PC-3 (cell line): ENCODE measurements at regions of chr18 and their contacts with region 1.

Region 1: GRCh38 chr18:67425724-67426123 is 90.8 kb downstream of the DSEL start:
- DNase-seq: peak; percentile 96
- ATAC-seq: peak; percentile 93
- H3K4me3 ChIP-seq: no peak overlapping the region
- H3K27ac ChIP-seq: peak overlapping the region; percentile 52
- H3K4me1 ChIP-seq: peaks cover 28% of the 10 kb centered on the region
- H3K27me3 ChIP-seq: no peaks in the 10 kb centered on the region
- CTCF ChIP-seq: no peak

Region 2: DNA sequence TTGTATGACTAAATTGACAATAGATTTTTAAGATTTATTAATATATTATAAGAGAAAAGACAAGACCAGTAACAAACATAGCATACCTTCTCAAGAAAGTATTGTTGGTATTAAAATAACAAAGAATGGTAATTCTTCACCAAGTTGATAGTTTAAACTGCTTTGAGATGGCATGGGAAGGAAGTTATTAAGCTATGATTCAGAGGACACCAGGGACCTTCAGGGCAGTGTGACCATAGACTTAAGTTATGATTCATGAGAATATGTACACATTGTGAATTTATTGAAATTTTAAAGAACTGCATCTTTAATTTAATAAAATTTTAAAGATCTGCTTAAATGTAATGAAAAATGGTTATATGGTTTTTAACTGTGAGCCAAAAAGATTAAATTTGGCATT is 114.9 kb before region 1 on chr18:
- CTCF ChIA-PET with region 1: no interaction called
- POLR2A ChIA-PET with region 1: no interaction called
- intact Hi-C with region 1: loop called (anchors 5 kb)
- DNase-seq: peak; percentile 75
- ATAC-seq: peak; percentile 100
- H3K4me3 ChIP-seq: no peak overlapping the region
- H3K27ac ChIP-seq: peak overlapping the region; percentile 72
- H3K4me1 ChIP-seq: peaks cover 12% of the 10 kb centered on the region
- H3K27me3 ChIP-seq: no peaks in the 10 kb centered on the region
- CTCF ChIP-seq: no peak

Region 3: GRCh38 chr18:67359873-67360838 is 65.6 kb before region 1 on chr18:
- CTCF ChIA-PET with region 1: no interaction called
- POLR2A ChIA-PET with region 1: no interaction called
- intact Hi-C with region 1: loop called (anchors 2 kb)
- DNase-seq: peak; percentile 93
- ATAC-seq: peak; percentile 99
- H3K4me3 ChIP-seq: peak overlapping the region; percentile 63
- H3K27ac ChIP-seq: peak overlapping the region; percentile 58
- H3K4me1 ChIP-seq: peaks cover 14% of the 10 kb centered on the region
- H3K27me3 ChIP-seq: no peaks in the 10 kb centered on the region
- CTCF ChIP-seq: no peak

Region 4: DNA sequence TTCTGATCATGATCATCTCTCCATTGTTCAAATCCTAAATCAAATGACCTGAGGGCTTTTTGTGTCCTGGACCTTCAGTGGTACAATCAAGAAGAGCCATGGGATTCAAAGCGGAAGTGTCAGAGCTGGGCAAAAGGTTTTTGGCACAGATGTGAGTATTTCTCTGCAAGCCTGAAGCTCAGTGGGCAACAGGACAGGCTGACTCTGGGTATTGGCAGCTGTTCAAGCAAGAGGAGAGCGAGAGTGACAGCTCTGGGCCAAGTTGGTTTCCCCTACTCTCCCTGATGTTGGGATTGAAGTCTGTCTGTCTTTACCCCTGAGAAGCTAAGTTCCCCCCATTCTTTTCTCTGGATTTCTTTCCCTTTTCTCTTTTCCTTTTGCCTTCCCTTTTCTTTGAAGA is 57.5 kb after region 1 on chr18:
- CTCF ChIA-PET with region 1: no interaction called
- POLR2A ChIA-PET with region 1: no interaction called
- intact Hi-C with region 1: no loop called
- DNase-seq: no peak
- ATAC-seq: no peak
- H3K4me3 ChIP-seq: no peak overlapping the region
- H3K27ac ChIP-seq: no peak overlapping the region
- H3K4me1 ChIP-seq: no peaks in the 10 kb centered on the region
- H3K27me3 ChIP-seq: no peaks in the 10 kb centered on the region
- CTCF ChIP-seq: no peak